SK-N-SH (cell line): ENCODE measurements at regions of chr6 and their contacts with region 1.

Region 1: DNA sequence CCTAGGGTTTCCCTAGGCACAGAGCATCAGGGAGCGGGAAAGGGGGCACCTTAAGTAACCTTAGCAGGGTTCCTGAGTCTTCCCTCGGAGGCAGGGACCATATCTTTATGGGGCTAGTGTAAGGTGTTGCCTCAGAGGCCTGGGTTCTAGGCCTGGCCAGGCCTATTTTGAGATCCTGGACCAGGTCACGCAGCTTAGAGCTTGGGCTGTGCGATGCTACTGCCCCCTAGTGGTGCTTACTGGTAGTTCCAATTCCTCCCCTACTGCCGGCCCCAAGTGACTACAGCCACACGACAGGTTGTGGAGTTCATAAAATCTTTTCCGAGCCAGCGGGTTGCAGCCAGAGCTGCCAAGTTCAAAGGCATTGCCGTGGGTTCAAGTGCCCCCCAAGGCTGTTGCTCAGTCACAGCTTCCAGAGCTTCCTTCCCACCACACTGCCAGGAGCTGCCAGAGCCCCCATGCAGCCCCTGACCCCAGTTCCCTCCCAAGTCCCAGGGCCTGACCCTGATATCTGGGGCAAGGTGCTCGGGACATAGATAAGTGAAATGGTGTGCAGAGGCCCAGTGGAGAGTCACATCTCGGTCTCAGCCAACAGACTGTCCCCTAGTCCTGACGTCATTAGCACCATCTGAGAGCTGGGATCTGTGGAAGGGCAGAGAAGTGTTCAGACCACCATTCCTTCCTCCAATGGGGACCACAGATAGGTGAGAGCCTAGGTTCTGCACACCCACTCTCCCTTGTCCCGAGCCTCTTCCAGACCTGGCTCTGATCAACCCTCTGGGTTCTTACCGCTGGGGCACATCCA is 3.3 kb downstream of the LRRC73 start:
- DNase-seq: peak; percentile 89
- H3K4me3 ChIP-seq: no peak overlapping the region; a peak in 1 of 4 replicates
- H3K27ac ChIP-seq: no peak overlapping the region; a peak in 1 of 4 replicates
- H3K4me1 ChIP-seq: peaks cover 0 to 26% of the 10 kb centered on the region in 2 experiments; a peak in 1 of 4 replicates
- H3K27me3 ChIP-seq: no peaks in the 10 kb centered on the region
- CTCF ChIP-seq: peak; percentile 91
- EP300 ChIP-seq: 0 out of 4 replicates have a peak, but pooled peaks of 1 of the 2 experiments have one; percentile 16
- RAD21 ChIP-seq: peak; percentile 94

Region 2: GRCh38 chr6:43436577-43437282 is 70.1 kb before region 1 on chr6:
- CTCF ChIA-PET with region 1: interaction called, 12 read pairs
- POLR2A ChIA-PET with region 1: interaction called, 3 read pairs
- DNase-seq: no peak
- H3K4me3 ChIP-seq: no peak overlapping the region
- H3K27ac ChIP-seq: no peak overlapping the region; a peak in 2 of 4 replicates
- H3K4me1 ChIP-seq: peaks cover 0 to 14% of the 10 kb centered on the region in 2 experiments; a peak in 1 of 4 replicates
- H3K27me3 ChIP-seq: no peaks in the 10 kb centered on the region
- CTCF ChIP-seq: no peak
- EP300 ChIP-seq: no peak
- RAD21 ChIP-seq: no peak

Region 3: DNA sequence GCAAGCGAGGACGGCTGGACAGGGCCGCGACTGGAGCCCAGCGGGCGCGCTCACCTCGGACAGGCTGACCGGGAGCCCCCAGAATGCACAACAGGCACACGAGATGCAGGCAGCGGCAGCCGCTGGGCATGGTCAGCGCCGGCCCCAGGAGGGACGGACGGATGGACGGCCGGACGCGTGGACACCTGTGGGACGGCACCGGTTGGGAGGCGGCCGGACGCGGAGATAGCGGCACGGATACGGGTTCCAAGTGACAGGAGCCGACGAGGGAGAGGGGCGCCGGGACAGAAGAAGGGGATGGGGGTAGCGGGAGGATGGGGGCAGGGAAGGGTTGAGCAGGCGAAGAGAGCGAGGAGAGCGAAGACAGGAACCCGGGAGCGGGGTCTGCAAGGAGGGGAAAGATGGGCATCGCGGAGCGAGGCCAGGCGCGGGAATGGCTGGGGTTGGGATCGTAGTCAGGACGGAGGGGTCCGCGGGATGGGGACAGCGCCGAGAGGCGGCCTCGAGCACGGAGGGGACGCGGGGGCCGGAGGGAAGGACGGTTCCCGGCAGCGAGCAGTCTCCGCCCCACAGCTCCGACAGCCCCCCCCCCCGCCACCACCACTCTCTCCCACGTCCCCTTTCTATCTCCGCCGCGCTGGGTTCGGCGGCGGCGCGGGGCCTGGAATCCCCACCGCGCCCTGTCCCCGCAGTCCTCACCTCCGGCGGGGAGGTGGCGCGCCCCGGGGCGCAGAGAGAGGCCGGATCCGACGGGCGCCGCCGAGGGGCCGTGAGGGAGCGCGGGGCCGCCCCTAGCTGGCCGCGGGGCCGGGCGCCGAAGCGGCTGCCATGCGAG is 52.0 kb before region 1 on chr6:
- CTCF ChIA-PET with region 1: interaction called, 382 read pairs
- POLR2A ChIA-PET with region 1: interaction called, 5 read pairs
- DNase-seq: peak; percentile 94
- H3K4me3 ChIP-seq: peak overlapping the region; percentile 49 to 60
- H3K27ac ChIP-seq: no peak overlapping the region; a peak in 1 of 4 replicates
- H3K4me1 ChIP-seq: peaks cover 0 to 8% of the 10 kb centered on the region in 2 experiments; a peak in 1 of 4 replicates
- H3K27me3 ChIP-seq: peaks cover 7% of the 10 kb centered on the region; the same call in 1 of the 2 replicates
- CTCF ChIP-seq: peak; percentile 15; the same call in 1 of the 2 replicates
- EP300 ChIP-seq: no peak
- RAD21 ChIP-seq: no peak

Region 4: DNA sequence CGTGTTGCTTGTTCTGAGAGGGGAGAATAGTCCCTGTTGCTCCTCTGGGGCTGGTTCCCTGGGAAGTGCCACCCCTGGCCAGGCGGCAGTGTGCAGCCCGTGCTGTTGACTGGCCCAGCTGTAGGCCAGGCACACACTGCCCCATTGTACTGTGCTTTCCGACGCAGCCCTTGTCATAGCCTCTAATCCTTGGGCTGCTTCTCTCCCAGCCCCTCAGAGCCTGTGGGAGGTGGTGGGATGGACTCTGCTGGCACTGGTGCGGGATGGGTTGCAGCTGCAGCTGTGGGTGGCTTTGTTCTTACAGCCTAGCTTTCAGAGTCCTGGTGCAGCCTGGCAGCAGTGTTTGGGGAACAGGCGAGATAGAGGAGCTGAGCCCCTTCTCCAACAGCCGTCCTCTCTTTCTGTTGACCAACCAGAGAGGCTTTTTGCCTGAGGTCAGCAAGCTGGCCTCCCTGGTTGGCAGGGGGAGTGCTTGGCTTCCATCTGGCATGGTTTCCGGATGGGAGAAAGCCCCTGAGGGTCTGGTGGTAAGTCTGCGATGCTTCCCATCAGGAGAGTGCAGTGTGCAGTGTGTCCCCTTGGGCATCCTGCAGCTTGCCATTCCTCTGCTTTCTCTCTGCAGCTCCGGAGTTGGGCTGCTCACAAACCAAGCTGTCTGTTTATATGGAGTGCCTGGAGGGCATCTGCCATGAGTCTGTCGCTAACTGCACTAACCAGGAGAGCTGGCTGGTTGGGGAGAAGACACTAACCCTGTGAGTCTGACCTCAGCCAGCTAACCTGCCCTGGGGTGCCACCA is 17.4 kb before region 1 on chr6:
- CTCF ChIA-PET with region 1: interaction called, 213 read pairs
- POLR2A ChIA-PET with region 1: interaction called, 10 read pairs
- DNase-seq: peak; percentile 89
- H3K4me3 ChIP-seq: no peak overlapping the region; a peak in 1 of 4 replicates
- H3K27ac ChIP-seq: no peak overlapping the region; a peak in 1 of 4 replicates
- H3K4me1 ChIP-seq: peaks cover 22 to 24% of the 10 kb centered on the region in 2 experiments
- H3K27me3 ChIP-seq: no peaks in the 10 kb centered on the region
- CTCF ChIP-seq: no peak
- EP300 ChIP-seq: peak in 1 of 2 experiments; percentile 50; a peak in 1 of 4 replicates
- RAD21 ChIP-seq: no peak

Region 5: GRCh38 chr6:43516697-43517504 is 10.0 kb after region 1 on chr6 and contains the starts of genes POLR1C and YIPF3:
- CTCF ChIA-PET with region 1: interaction called, 21 read pairs
- POLR2A ChIA-PET with region 1: interaction called, 6 read pairs
- DNase-seq: peak; percentile 98
- H3K4me3 ChIP-seq: peak within 1 kb of the TSS; percentile 86 to 100
- H3K27ac ChIP-seq: peak within 1 kb of the TSS; percentile 83 to 88
- H3K4me1 ChIP-seq: peaks cover 13 to 19% of the 10 kb centered on the region in 2 experiments
- H3K27me3 ChIP-seq: no peaks in the 10 kb centered on the region
- CTCF ChIP-seq: no peak
- EP300 ChIP-seq: no peak
- RAD21 ChIP-seq: no peak
- polyA plus RNA-seq, gene POLR1C: 59.1 and 80.6 TPM in 2 replicates
- polyA plus RNA-seq, gene YIPF3: 219 and 248 TPM in 2 replicates